Endothelial cell of umbilical vein (primary cell): ENCODE measurements at regions of chr7 and their contacts with region 1.

Region 1: DNA sequence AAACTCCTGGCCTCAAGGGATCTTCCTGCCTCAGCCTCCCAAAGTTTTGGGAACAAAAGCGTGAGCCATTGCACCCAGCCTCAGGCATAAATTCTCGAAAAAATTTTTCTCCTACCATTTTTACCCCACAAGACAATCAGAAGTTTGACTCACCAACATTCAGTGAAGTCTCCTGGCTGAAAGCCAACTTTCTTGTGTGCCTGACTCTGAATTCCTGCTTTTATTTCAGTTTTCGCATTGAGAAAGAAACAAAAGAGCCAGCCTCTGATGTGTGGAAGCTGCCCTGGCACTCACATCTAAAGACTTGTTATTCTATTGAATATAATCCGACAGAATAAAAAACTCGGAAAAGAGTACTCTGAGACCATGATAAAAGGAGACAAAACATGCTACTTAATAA is 402.9 kb downstream of the MAGI2 start:
- DNase-seq: peak; percentile 39
- H3K4me3 ChIP-seq: no peak overlapping the region
- H3K27ac ChIP-seq: no peak overlapping the region
- H3K4me1 ChIP-seq: no peaks in the 10 kb centered on the region
- H3K27me3 ChIP-seq: no peaks in the 10 kb centered on the region
- CTCF ChIP-seq: no peak
- POLR2A ChIP-seq: no peak

Region 2: GRCh38 chr7:79064187-79064823 is 13.7 kb after region 1 on chr7:
- CTCF ChIA-PET with region 1: interaction called, 3 read pairs
- POLR2A ChIA-PET with region 1: no interaction called
- dilution Hi-C with region 1: no loop called
- intact Hi-C with region 1: loop called (anchors 1 kb)
- DNase-seq: no peak
- H3K4me3 ChIP-seq: no peak overlapping the region
- H3K27ac ChIP-seq: no peak overlapping the region
- H3K4me1 ChIP-seq: no peaks in the 10 kb centered on the region
- H3K27me3 ChIP-seq: no peaks in the 10 kb centered on the region
- CTCF ChIP-seq: no peak
- POLR2A ChIP-seq: no peak